ENCODE measurements at regions of chr7 and their contacts with region 1.

Region 1: GRCh38 chr7:139645572-139646523 is 122.4 kb downstream of the CLEC2L start:
- DNase-seq: peak; percentile 83
- ATAC-seq: peak; percentile 39
- H3K4me3 ChIP-seq: no peak overlapping the region
- H3K4me3 Mint-ChIP-seq: peak overlapping the region; percentile 40
- H3K27ac ChIP-seq: no peak overlapping the region
- H3K27ac Mint-ChIP-seq: peak overlapping the region; percentile 57
- H3K4me1 ChIP-seq: peaks cover 38 to 39% of the 10 kb centered on the region in 2 donors
- H3K4me1 Mint-ChIP-seq: peaks cover 38% of the 10 kb centered on the region
- H3K27me3 ChIP-seq: no peaks in the 10 kb centered on the region
- H3K27me3 Mint-ChIP-seq: no peaks in the 10 kb centered on the region
- CTCF ChIP-seq: peak; percentile 91

Region 2: DNA sequence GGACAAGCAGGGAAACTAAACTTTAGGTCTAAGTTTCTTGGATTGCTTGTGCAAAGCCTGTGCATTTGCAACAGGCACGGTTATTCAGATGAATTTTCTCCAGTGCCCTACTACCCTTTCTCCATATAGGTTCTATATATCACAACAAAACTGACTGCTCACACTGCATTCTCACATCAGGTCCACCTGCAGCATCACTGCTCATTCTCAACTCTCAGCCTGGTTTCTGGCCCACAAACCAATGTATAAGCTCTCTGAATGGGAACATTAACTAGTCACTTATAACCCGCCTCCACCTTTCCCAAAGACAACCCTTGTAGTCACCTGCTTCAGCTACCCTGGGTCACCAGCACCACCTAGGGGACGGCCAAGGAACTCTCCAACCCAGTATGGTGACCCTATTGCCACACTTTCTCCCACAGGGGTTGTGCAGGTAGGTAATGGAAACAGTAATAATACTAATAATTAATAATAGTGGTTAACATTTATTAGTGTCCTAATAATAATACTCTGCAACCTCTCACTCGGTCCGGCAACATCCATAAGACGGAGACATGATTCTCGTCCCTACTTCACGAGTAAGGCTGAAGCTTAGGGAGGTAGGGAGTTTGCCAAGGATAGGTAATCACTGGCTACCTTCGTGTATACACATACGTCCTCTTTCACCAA is 25.0 kb before region 1 on chr7:
- CTCF ChIA-PET with region 1: interaction called, 17 read pairs
- POLR2A ChIA-PET with region 1: no interaction called
- intact Hi-C with region 1: no loop called
- DNase-seq: peak; percentile 36
- ATAC-seq: no peak
- H3K4me3 ChIP-seq: no peak overlapping the region
- H3K4me3 Mint-ChIP-seq: no peak overlapping the region
- H3K27ac ChIP-seq: no peak overlapping the region
- H3K27ac Mint-ChIP-seq: no peak overlapping the region
- H3K4me1 ChIP-seq: no peaks in the 10 kb centered on the region
- H3K4me1 Mint-ChIP-seq: peaks cover 4% of the 10 kb centered on the region
- H3K27me3 ChIP-seq: no peaks in the 10 kb centered on the region
- H3K27me3 Mint-ChIP-seq: no peaks in the 10 kb centered on the region
- CTCF ChIP-seq: peak; percentile 81

Region 3: DNA sequence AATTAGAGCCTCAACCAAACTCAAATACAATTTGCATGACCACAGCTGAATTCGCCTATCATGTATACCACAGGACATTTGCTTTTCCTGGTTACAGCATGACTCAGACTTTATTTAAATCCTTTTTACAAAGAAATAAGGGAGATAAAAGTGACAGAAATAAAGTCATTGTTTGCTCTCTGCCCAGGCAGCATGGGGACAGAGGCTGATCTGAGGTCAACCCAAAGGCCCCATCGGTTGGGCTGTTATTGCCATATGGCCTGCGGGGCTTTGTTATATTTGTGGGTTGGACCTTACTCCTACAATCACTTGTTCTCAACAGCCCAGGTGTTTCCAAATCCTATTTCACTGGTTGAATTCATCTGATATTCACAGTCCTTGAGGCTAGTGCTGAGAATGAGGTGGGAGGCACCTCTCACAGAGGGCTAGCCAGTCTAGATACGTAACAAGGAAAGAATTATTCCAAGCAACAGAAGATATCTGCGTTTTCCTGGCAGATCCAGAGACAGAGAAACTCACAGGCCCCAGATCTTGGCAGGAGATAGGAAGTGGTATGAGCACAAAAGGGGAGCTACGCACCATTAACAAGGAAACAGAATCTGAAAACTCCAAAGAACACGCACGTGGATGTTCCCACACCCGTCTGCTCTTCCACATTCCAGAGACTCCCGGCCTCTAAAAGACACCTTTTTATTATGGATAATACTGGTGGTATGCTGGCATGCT is 14.6 kb after region 1 on chr7:
- CTCF ChIA-PET with region 1: interaction called, 20 read pairs
- POLR2A ChIA-PET with region 1: no interaction called
- intact Hi-C with region 1: no loop called
- DNase-seq: no peak
- ATAC-seq: no peak
- H3K4me3 ChIP-seq: no peak overlapping the region
- H3K4me3 Mint-ChIP-seq: no peak overlapping the region
- H3K27ac ChIP-seq: no peak overlapping the region
- H3K27ac Mint-ChIP-seq: no peak overlapping the region
- H3K4me1 ChIP-seq: peaks cover 0 to under 1% of the 10 kb centered on the region in 2 donors
- H3K4me1 Mint-ChIP-seq: peaks cover 5% of the 10 kb centered on the region
- H3K27me3 ChIP-seq: no peaks in the 10 kb centered on the region
- H3K27me3 Mint-ChIP-seq: no peaks in the 10 kb centered on the region
- CTCF ChIP-seq: no peak

Region 4: DNA sequence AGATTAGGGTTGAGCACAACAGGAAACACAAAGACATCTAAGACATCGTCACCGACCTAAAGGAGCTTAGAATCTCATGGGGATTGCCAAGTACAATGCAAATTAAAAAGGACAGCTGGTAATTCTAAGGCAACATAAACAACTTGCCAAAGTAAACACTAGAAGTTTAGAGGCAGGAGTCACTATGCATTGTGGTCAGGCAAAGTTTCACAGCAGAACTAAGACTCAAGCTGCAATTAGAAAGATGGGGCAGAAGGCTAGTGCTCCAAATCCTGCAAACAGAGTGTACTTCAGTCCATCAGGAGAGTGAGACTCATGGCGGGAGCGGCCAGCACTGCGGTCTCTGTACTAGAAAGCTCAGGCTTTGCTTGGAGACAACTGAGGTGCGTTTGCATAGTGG is 79.2 kb after region 1 on chr7:
- CTCF ChIA-PET with region 1: interaction called, 12 read pairs
- POLR2A ChIA-PET with region 1: interaction called, 4 read pairs
- intact Hi-C with region 1: loop called (anchors 5 kb)
- DNase-seq: peak; percentile 56
- ATAC-seq: peak; percentile 65
- H3K4me3 ChIP-seq: no peak overlapping the region
- H3K4me3 Mint-ChIP-seq: peak overlapping the region; percentile 63
- H3K27ac ChIP-seq: peak overlapping the region; percentile 86 to 89
- H3K27ac Mint-ChIP-seq: peak overlapping the region; percentile 92
- H3K4me1 ChIP-seq: peaks cover 26 to 38% of the 10 kb centered on the region in 2 donors
- H3K4me1 Mint-ChIP-seq: peaks cover 37% of the 10 kb centered on the region
- H3K27me3 ChIP-seq: no peaks in the 10 kb centered on the region
- H3K27me3 Mint-ChIP-seq: no peaks in the 10 kb centered on the region
- CTCF ChIP-seq: no peak

Region 5: GRCh38 chr7:139767561-139767982 is 121.7 kb after region 1 on chr7:
- CTCF ChIA-PET with region 1: interaction called, 26 read pairs
- POLR2A ChIA-PET with region 1: no interaction called
- intact Hi-C with region 1: no loop called
- DNase-seq: no peak
- ATAC-seq: no peak
- H3K4me3 ChIP-seq: no peak overlapping the region
- H3K4me3 Mint-ChIP-seq: peak overlapping the region; percentile 0
- H3K27ac ChIP-seq: peak overlapping the region in 1 of 2 donors; percentile 10
- H3K27ac Mint-ChIP-seq: peak overlapping the region; percentile 6
- H3K4me1 ChIP-seq: peaks cover 23 to 24% of the 10 kb centered on the region in 2 donors
- H3K4me1 Mint-ChIP-seq: peaks cover 52% of the 10 kb centered on the region
- H3K27me3 ChIP-seq: no peaks in the 10 kb centered on the region
- H3K27me3 Mint-ChIP-seq: no peaks in the 10 kb centered on the region
- CTCF ChIP-seq: no peak

Region 6: DNA sequence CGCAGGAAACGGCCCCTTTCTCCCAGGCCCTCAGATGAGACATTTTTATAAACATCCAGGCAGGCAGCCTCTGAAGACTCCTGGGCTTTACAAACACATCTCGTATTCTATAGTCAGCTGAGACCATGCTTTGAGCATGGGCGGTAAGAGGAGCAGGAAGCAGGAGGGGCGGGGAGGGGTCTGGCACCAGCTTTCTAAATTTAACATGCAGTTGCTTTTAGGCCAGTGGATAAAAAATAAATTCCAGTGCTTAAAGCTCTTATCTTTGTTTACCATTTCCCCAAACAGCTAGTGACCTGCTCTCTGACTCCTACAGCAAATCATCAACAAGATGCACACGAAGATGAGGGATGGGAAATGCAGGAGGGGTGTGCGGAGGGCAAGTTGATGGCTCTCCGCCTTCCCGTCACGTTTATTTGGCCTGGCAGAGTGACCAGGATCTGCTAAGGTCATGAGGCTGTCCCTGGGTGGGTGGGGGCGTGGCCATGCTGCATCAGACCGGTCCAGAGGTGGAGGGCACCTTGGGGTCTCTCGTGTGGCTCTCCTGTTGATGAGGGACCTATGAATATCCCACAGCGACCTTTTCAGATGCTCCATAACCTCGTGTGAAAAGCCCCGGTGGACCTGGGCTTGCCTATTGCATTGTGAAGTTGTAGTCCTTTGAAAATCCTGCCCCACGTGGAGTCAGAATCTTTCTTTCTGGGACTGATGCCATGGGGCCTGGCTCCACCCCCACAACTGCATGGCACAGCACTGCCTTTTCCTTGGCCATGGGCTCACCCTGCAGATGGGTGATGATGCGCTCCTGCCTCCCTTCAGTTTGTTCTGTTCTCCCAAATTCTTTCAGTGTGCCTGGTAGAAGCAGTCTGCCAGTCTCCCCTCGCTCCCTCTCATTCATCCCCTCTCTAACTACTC is 349.4 kb after region 1 on chr7:
- CTCF ChIA-PET with region 1: interaction called, 269 read pairs
- POLR2A ChIA-PET with region 1: no interaction called
- intact Hi-C with region 1: no loop called
- DNase-seq: no peak
- ATAC-seq: no peak
- H3K4me3 ChIP-seq: no peak overlapping the region
- H3K4me3 Mint-ChIP-seq: no peak overlapping the region
- H3K27ac ChIP-seq: no peak overlapping the region
- H3K27ac Mint-ChIP-seq: no peak overlapping the region
- H3K4me1 ChIP-seq: peaks cover 0 to 2% of the 10 kb centered on the region in 2 donors
- H3K4me1 Mint-ChIP-seq: peaks cover under 1% of the 10 kb centered on the region
- H3K27me3 ChIP-seq: no peaks in the 10 kb centered on the region
- H3K27me3 Mint-ChIP-seq: no peaks in the 10 kb centered on the region
- CTCF ChIP-seq: no peak

Region 7: DNA sequence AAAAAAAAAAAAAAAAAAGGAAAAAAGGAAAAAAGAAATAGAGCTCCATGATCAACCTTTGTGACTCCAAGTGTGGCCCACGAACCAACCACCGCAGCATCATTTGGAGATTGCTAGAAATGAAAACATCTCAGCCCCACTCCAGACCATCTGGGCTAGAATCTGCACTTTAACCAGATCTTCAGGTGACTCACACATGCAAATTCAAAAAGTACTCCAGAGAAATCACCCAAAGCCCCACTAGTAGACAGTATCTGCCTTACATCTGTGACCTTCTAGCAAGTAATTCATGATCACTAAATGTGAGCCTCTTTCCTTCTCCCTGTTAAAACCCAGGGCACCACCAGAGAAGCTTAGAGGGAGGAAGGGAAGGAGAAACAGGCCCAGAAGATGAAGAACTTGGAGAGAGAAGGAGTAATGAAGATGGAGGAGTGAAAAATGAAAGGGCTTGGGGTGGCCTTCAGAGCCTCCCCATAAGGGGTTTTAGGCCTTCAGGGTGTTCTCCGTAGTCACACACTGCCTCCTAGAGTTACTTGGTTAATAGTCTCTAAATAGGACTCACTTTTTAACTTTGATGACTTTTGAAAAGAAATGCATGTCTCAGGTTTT is 658.4 kb after region 1 on chr7:
- CTCF ChIA-PET with region 1: interaction called, 13 read pairs
- POLR2A ChIA-PET with region 1: no interaction called
- intact Hi-C with region 1: no loop called
- DNase-seq: peak; percentile 81
- ATAC-seq: peak; percentile 92
- H3K4me3 ChIP-seq: no peak overlapping the region
- H3K4me3 Mint-ChIP-seq: peak overlapping the region; percentile 63
- H3K27ac ChIP-seq: peak overlapping the region; percentile 49 to 58
- H3K27ac Mint-ChIP-seq: peak overlapping the region; percentile 96
- H3K4me1 ChIP-seq: peaks cover 6 to 11% of the 10 kb centered on the region in 2 donors
- H3K4me1 Mint-ChIP-seq: peaks cover 7% of the 10 kb centered on the region
- H3K27me3 ChIP-seq: peaks cover 0 to 3% (median 0%) of the 10 kb centered on the region in 4 experiments
- H3K27me3 Mint-ChIP-seq: peaks cover 6% of the 10 kb centered on the region
- CTCF ChIP-seq: peak; percentile 81